Pancreas (tissue), 10 donors: ENCODE measurements at regions of chr7 and their contacts with region 1.

Region 1: DNA sequence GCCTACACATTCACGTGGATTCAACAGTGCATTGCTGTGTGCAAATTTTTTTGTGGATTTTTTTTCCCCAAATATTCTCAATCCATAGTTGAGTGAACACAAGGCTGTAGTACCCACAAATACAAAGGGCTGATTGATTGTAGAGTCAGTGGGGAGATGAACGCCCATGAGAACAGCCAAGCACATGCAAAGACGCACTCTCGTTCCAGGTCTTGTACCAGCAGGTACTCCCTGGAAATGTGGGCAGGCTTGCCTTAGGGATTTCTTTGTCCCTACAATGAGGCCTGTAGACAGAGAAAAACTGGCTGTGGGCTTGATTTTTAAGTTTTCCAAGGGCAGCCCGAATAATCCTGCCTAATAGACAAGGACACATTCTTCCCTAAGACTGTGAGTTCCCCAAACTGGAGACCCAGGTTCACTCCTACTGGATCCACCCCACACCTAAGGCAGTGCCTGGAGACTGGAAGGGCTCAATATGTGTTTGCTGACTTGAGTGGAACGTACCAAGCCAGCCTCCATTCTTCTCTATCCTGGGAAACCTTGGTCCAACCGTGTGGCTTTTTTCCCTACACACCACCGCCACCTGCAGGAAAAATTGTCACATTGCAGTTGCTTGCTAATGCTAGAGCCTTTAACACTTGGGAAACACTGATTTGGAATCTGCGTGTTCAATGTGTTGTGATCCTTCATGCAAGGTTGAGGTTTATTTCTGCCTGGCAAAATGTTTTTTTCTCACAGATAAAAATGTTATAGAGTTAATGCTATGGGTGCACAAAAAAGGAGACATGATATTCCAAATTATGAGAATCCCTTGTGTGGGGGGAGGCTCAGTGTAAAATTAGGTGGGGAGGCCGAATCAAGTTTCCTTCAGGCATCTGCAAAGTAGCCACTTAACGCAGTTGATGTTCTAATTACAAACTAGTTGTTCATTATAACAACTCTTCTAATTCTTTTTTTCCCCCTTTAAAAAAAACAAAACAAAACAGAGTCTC is 49.3 kb downstream of the PPP1R17 start:
- DNase-seq: peak in 5 of 6 donors; percentile 43 to 74 (median 63)
- ATAC-seq: peak; percentile 91 to 98 (median 94)
- H3K4me3 ChIP-seq: no peak overlapping the region
- H3K27ac ChIP-seq: no peak overlapping the region
- H3K4me1 ChIP-seq: no peaks in the 10 kb centered on the region
- H3K27me3 ChIP-seq: no peaks in the 10 kb centered on the region
- CTCF ChIP-seq: peak; percentile 73 to 93 (median 80)

Region 2: DNA sequence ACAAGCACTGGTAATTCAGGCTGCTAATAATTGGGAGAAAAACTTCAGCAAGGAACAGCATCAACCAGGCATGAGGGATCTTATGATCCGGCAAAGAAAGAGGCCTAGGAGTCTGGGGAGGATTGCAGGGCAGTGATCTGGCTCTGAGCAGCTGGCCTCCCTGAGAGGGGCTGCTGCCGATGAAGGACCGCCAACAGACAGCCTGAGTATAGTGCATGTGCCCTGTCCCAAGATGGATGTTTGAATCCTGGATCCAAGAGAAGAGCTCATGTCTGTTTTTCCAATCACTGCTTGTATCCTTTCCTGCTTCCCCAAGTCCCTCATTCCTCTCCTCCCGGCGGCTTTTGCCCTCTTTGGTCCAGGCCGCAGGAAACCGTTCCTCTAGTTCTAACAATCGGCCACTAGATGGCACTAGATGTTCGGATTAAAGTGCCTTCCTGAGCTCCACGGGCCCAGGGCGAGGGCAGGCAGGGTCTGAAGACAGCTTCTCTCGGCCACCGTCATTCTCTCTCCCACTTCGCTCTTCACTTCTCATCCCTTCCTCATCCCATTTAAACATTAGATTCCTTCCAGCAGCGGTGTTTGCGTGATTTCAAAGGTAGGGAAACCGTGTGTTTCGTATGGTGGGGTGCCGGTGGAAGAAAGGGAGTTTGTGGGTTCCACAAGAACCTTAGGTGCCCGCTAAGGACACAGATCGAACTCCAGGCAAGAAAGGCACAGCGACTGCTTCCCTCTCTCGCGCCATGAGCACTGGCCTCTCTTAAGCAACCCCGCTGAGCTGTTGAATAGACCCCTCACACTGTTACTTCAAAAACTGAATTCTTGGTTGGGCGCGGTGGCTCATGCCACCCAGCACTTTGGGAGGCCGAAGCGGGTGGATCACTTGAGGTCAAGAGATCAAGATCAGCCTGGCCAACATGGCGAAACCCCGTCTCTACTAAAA is 601.8 kb before region 1 on chr7:
- intact Hi-C with region 1: loop called in 1 of 3 experiments (anchors 5 kb)
- DNase-seq: peak; percentile 49 to 80 (median 68)
- ATAC-seq: peak; percentile 91 to 99 (median 98)
- H3K4me3 ChIP-seq: no peak overlapping the region
- H3K27ac ChIP-seq: no peak overlapping the region
- H3K4me1 ChIP-seq: no peaks in the 10 kb centered on the region
- H3K27me3 ChIP-seq: no peaks in the 10 kb centered on the region
- CTCF ChIP-seq: peak; percentile 49 to 82 (median 60)

Region 3: DNA sequence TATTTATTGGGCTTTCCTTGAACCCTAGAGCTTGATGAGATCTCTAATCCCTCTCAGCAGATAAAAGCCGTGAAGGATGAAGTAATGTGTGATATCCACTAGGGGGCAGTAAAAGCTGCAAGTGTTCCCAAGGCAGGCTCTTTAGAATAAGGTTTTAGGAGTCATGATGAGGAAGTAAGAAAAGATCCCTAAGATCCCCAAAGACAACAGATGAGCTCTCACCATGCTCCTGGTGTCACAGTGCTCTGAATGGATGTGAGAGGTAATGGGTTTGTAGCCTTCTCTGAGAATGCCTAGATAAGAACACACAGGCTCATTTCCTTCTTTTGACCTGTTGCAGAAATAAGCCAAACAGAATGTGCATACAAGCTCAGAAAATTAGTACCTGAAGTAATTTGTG is 292.8 kb before region 1 on chr7:
- intact Hi-C with region 1: loop called in 1 of 3 experiments (anchors 10 kb)
- DNase-seq: peak in 1 of 6 donors; percentile 12
- ATAC-seq: peak; percentile 78 to 97 (median 88)
- H3K4me3 ChIP-seq: no peak overlapping the region
- H3K27ac ChIP-seq: no peak overlapping the region
- H3K4me1 ChIP-seq: no peaks in the 10 kb centered on the region
- H3K27me3 ChIP-seq: no peaks in the 10 kb centered on the region
- CTCF ChIP-seq: peak; percentile 69 to 78 (median 73)

Region 4: GRCh38 chr7:31651869-31652268 is 84.4 kb before region 1 on chr7:
- intact Hi-C with region 1: loop called in 1 of 3 experiments (anchors 5 kb)
- DNase-seq: no peak
- ATAC-seq: no peak
- H3K4me3 ChIP-seq: no peak overlapping the region
- H3K27ac ChIP-seq: no peak overlapping the region
- H3K4me1 ChIP-seq: no peaks in the 10 kb centered on the region
- H3K27me3 ChIP-seq: no peaks in the 10 kb centered on the region
- CTCF ChIP-seq: no peak

Region 5: DNA sequence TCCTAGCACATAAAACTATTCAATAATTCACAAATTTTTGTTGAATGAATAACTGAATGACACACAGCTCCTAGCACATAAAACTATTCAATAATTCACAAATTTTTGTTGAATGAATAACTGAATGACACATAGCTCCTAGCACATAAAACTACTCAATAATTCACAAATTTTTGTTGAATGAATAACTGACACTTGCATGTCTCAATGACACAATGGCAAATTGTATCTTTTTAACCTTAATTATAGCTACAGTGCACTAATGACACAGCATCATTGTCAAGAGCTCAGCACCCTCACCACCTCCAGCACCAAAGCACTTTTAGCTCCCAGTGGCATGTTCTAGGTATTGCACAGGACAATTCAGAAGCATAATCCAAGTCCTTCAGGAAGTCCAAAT is 202.4 kb after region 1 on chr7:
- intact Hi-C with region 1: no loop called
- DNase-seq: no peak
- ATAC-seq: no peak
- H3K4me3 ChIP-seq: no peak overlapping the region
- H3K27ac ChIP-seq: no peak overlapping the region
- H3K4me1 ChIP-seq: no peaks in the 10 kb centered on the region
- H3K27me3 ChIP-seq: no peaks in the 10 kb centered on the region
- CTCF ChIP-seq: no peak